Heart left ventricle (tissue), 16 donors: ENCODE measurements at regions of chr2 and their contacts with region 1.

Region 1: DNA sequence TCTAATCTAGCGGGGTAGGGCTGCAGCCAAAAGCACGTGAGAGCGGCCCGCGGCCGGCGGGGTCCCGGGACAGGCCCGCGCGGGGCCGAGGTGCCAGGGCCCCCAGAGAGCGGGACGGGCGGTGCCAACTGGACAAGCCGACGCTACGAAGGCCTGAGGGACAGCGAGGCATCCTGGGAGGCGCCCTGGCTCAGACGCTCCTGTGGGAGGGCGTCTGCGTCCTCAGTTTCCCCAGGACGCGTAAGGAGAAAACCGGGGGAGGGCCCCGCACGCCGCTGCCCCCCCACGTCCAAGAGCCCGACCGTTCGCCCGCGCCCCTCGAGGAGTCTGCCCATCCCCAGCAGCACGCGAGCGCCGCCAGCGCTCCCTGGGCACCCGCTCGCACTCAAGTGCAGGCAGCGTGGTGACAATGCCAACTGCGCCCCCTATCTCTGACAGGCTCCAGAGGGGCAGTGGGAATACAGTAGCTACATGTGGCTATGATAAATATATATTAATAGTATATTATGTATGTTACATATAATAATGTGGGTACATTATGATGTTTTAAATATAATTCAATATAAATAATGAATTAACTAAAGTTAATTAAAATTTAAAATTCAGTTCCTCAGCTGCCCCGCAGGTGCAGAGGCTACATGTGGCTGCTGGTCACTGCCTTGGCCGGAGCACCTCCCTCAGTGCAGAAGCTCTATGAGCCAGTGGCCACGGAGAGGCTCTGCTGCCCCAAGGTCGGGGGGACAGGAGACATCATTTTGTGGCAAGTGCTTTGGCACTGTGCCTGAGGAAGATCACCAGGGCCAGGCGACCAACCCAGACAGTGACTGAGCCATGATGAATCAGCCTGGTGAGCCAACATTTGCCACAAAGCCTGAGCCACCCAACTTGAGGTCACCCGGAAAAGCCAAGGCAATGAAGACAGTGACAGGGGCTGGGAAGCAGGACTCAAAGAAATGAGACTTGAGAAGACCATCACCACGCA is 5.5 kb upstream of the SFT2D3 start:
- DNase-seq: peak; percentile 78 to 89 (median 84)
- ATAC-seq: peak; percentile 65 to 91 (median 88)
- H3K4me3 ChIP-seq: peak overlapping the region in 10 of 12 donors; percentile 23 to 55 (median 46)
- H3K27ac ChIP-seq: peak overlapping the region in 5 of 12 donors; percentile 23 to 72 (median 36)
- H3K4me1 ChIP-seq: peaks cover 0 to 18% (median 8%) of the 10 kb centered on the region in 12 donors
- H3K27me3 ChIP-seq: no peaks in the 10 kb centered on the region
- CTCF ChIP-seq: peak; percentile 40 to 85 (median 70)
- POLR2A ChIP-seq: no peak

Region 2: DNA sequence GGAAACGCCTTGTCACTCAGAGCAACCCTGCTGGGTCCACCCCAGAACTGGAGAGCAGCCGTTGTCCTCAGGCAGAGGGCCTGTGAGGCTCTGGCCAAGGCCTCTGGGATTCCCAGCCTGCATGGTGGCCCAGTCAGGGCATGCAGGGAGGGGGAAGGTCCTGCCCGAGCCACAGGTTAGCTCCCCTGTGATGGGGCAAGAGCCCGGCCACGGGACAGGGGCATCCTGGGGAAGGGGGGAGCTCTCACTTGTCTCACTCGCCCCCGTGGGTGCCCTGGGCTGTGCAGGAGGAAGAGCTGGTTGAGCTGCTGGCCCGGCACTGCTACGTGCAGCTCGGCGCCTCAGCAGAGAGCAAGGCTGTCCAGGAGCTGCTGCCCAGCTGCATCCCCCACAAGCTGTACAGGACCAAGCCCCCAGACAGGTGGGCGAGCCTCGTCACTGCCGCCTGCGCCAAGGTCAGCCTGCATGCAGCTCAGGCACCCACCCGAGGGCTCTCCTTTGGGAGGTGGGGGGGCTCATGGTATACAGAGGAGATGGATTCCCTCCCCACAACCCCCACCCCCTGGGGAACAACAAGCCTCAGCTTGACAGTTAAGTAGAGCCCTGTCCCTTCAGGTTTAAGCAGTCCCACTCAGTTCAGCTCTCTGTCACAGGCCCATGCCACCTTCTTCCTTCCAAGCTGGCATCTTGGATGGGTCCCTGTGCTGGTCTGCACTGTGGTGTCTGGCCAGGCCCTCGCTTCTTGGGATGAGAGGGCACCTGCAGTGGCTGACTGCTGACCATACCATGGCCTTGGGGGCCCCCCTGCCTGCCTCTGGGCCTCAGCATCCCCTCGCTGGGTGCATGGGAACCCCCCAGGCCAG is 70.5 kb before region 1 on chr2:
- intact Hi-C with region 1: loop called in 1 of 10 experiments (anchors 5 kb)
- DNase-seq: peak in 2 of 5 donors; percentile 30 to 42
- ATAC-seq: peak in 1 of 4 donors; percentile 2
- H3K4me3 ChIP-seq: no peak overlapping the region
- H3K27ac ChIP-seq: no peak overlapping the region
- H3K4me1 ChIP-seq: peaks cover 0 to 29% (median 4%) of the 10 kb centered on the region in 12 donors
- H3K27me3 ChIP-seq: peaks cover 0 to 4% (median 0%) of the 10 kb centered on the region in 9 donors
- CTCF ChIP-seq: no peak
- POLR2A ChIP-seq: no peak

Region 3: GRCh38 chr2:127649684-127650040 is 46.1 kb before region 1 on chr2:
- intact Hi-C with region 1: loop called in 4 of 10 experiments (anchors 5 to 10 kb)
- DNase-seq: peak; percentile 84 to 93 (median 85)
- ATAC-seq: peak; percentile 8 to 38 (median 18)
- H3K4me3 ChIP-seq: no peak overlapping the region
- H3K27ac ChIP-seq: peak overlapping the region; percentile 50 to 98 (median 84)
- H3K4me1 ChIP-seq: peaks cover 29 to 91% (median 80%) of the 10 kb centered on the region in 12 donors
- H3K27me3 ChIP-seq: no peaks in the 10 kb centered on the region
- CTCF ChIP-seq: peak; percentile 73 to 93 (median 88)
- POLR2A ChIP-seq: no peak